Heart left ventricle (tissue), 16 donors: ENCODE measurements at regions of chr7 and their contacts with region 1.

Region 1: DNA sequence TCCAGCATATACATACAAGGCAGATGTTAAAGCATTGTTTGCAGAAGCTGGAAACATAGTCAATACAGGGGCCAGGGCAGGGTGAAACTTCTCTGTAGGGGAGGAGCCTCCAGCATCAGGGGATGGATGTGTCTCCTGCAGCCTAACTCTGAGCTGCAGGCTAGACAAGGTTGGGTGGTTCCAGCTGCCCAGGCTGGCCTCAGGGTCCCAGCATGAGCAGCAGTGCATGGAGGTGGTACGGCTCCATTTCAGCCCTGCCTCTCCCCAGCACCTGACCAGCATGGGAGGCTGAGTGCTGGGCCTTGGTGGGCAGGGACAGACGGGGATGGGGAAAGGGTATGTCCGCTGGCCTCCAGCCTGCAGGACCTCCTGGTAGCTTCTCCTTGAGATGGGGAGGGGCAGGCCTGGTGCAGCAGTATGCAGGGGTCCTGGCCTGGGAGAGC is 7.4 kb upstream of the TBRG4 start:
- DNase-seq: no peak
- ATAC-seq: peak in 1 of 4 donors; percentile 11
- H3K4me3 ChIP-seq: no peak overlapping the region
- H3K27ac ChIP-seq: no peak overlapping the region
- H3K4me1 ChIP-seq: no peaks in the 10 kb centered on the region
- H3K27me3 ChIP-seq: no peaks in the 10 kb centered on the region
- CTCF ChIP-seq: no peak
- POLR2A ChIP-seq: no peak

Region 2: GRCh38 chr7:44967571-44968446 is 151.1 kb before region 1 on chr7:
- intact Hi-C with region 1: loop called in 2 of 10 experiments (anchors 5 kb)
- DNase-seq: no peak
- ATAC-seq: peak in 1 of 4 donors; percentile 31
- H3K4me3 ChIP-seq: no peak overlapping the region
- H3K27ac ChIP-seq: no peak overlapping the region
- H3K4me1 ChIP-seq: peaks cover 0 to 5% (median 3%) of the 10 kb centered on the region in 12 donors
- H3K27me3 ChIP-seq: peaks cover 0 to 7% (median 0%) of the 10 kb centered on the region in 9 donors
- CTCF ChIP-seq: peak in 8 of 12 donors; percentile 9 to 47 (median 28)
- POLR2A ChIP-seq: no peak